A549 (cell line): ENCODE measurements at regions of chr17 and their contacts with region 1.

Region 1: GRCh38 chr17:81484195-81484979 is 28.2 kb downstream of the ACTG1 start:
- DNase-seq: peak; percentile 80 to 88
- ATAC-seq: peak; percentile 51 to 69
- H3K4me3 ChIP-seq: peak overlapping the region; percentile 37
- H3K27ac ChIP-seq: peak overlapping the region; percentile 86 to 89
- H3K4me1 ChIP-seq: peaks cover 39% of the 10 kb centered on the region
- CTCF ChIP-seq: peak; percentile 100
- EP300 ChIP-seq: no peak
- POLR2A ChIP-seq: 0 out of 2 replicates have a peak, but pooled peaks have one; percentile 21
- RAD21 ChIP-seq: peak; percentile 93 to 100

Region 2: GRCh38 chr17:80720610-80721577 is 763.5 kb before region 1 on chr17:
- CTCF ChIA-PET with region 1: no interaction called
- POLR2A ChIA-PET with region 1: no interaction called
- DNase-seq: peak; percentile 74 to 78
- ATAC-seq: peak; percentile 84 to 89
- H3K4me3 ChIP-seq: no peak overlapping the region
- H3K27ac ChIP-seq: peak overlapping the region; percentile 32 to 76
- H3K4me1 ChIP-seq: peaks cover 40% of the 10 kb centered on the region
- CTCF ChIP-seq: no peak
- EP300 ChIP-seq: peak in 1 of 2 experiments; percentile 16; a peak in 1 of 5 replicates
- POLR2A ChIP-seq: no peak
- RAD21 ChIP-seq: no peak

Region 3: DNA sequence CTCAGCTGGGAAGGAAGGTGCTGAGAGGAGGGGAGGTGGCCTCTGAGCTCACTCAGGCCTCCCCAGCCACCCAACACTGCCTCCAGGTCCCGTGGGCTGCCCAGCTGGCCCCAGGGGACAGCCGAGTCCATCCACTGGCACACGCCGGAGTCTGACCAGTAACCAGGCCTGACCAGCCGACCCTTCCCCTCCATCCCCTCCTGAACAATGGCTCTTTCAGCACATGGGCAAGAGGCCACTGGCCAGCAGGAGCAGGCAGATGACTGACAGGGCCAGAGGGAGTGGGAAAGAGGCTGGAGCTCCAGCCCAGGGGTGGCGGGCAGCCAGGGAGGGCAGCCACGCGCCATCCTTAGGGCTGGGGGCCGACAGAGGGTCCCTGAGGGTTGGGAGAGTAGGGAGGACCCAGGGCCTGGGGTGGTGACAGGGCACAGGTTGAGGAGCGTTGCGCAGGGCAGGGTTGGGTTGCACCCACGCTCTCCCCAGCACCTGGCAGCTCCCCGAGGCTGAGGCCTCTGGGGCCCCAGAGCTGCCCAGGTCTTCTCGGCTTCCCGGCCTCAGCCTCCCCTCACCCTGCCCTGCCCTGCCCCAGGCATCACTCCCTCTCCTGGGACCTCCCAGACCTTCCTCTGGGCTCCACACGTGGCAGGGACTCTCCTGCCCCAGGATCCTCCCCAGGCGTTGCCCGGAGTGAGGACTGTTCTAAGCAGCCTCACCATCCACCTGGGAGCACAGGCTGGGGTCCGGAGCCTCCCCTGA is 169.1 kb before region 1 on chr17:
- CTCF ChIA-PET with region 1: interaction called, 60 read pairs
- POLR2A ChIA-PET with region 1: no interaction called
- DNase-seq: no peak
- ATAC-seq: peak; percentile 9 to 19; a peak in 3 of 6 replicates
- H3K4me3 ChIP-seq: no peak overlapping the region
- H3K27ac ChIP-seq: 0 out of 6 replicates have a peak overlapping the region, but pooled peaks of 1 of the 2 experiments have one; percentile 33
- H3K4me1 ChIP-seq: no peaks in the 10 kb centered on the region; the same call in 2 of the 3 replicates
- CTCF ChIP-seq: no peak
- EP300 ChIP-seq: no peak
- POLR2A ChIP-seq: no peak
- RAD21 ChIP-seq: no peak

Region 4: DNA sequence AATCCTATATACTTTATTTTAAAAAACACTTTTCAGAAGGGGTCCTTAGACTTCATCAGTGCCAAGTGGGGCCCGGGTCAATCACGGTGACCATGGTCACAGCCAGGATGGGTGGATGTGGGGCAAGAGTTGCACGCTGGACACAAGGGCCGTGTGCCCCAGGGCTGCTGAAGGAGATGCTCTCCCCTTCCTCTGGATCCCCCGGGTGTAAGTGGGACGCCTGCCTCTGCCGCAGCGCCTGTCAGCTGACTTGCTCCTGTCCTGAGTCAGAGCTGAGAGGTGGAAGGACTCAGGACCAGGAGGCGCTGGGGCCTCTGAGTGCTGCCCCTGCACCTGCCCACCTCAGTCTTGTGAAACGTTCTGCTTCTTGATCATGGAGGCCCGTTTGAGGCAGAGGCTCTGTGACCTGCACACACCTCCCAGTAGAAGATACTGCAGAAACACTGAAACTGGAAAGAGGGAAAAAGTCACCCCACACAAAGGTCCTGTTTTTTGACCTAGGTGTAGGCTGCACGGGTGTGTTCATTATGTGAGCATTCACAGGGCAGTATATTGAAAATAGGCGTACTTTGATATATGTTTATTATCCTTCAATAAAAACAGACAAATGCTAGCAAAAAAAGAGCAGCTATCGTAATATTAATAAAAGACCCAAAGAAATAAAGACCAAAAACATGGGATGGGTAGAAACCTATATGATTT is 130.0 kb before region 1 on chr17:
- CTCF ChIA-PET with region 1: interaction called, 20 read pairs
- POLR2A ChIA-PET with region 1: no interaction called
- DNase-seq: no peak
- ATAC-seq: 0 out of 6 replicates have a peak, but pooled peaks of 1 of the 2 experiments have one; percentile 22
- H3K4me3 ChIP-seq: no peak overlapping the region
- H3K27ac ChIP-seq: no peak overlapping the region
- H3K4me1 ChIP-seq: 0 out of 3 replicates have a peak, but pooled peaks cover 4% of the 10 kb centered on the region
- CTCF ChIP-seq: no peak
- EP300 ChIP-seq: no peak
- POLR2A ChIP-seq: no peak
- RAD21 ChIP-seq: no peak

Region 5: GRCh38 chr17:81385320-81386111 is 98.9 kb before region 1 on chr17:
- CTCF ChIA-PET with region 1: interaction called, 14 read pairs
- POLR2A ChIA-PET with region 1: no interaction called
- DNase-seq: no peak
- ATAC-seq: no peak
- H3K4me3 ChIP-seq: no peak overlapping the region
- H3K27ac ChIP-seq: no peak overlapping the region
- H3K4me1 ChIP-seq: peaks cover 13% of the 10 kb centered on the region; the same call in 2 of the 3 replicates
- CTCF ChIP-seq: no peak
- EP300 ChIP-seq: no peak
- POLR2A ChIP-seq: no peak
- RAD21 ChIP-seq: no peak

Region 6: DNA sequence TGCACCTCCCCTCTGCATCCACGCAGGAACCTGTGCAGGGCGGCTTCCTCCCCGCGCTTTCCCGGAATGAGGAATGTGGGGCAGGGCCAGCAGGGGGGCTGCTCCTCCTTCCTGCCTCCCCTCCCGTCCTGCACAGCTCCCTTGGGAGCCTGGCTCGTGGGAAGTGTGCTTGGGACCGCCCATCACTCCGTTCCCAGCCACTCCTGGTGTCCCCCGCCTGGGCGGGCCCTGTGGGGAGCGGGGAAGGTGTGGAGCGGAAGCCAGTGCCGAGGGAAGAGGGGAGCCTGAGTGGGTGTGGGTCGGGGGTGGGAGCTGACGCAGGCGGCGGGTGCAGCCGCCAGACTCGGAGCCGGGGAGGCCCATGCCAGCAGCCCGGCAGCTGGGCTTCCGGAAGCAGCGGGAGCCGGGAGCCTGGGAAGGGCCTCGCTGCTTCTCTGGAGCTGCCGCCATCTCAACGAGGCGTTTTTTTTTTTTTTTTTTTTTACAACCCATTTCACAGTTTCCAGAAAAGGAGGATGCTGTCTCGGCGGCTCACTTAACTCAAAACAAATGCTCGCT is 65.0 kb before region 1 on chr17:
- CTCF ChIA-PET with region 1: interaction called, 23 read pairs
- POLR2A ChIA-PET with region 1: interaction called, 6 read pairs
- DNase-seq: peak; percentile 92 to 97
- ATAC-seq: peak; percentile 67 to 84
- H3K4me3 ChIP-seq: peak overlapping the region; percentile 38
- H3K27ac ChIP-seq: peak overlapping the region; percentile 98 to 100
- H3K4me1 ChIP-seq: peaks cover 77% of the 10 kb centered on the region
- CTCF ChIP-seq: no peak
- EP300 ChIP-seq: peak; percentile 18 to 36; a peak in 1 of 5 replicates
- POLR2A ChIP-seq: peak; percentile 70
- RAD21 ChIP-seq: no peak; a peak in 1 of 5 replicates

Region 7: DNA sequence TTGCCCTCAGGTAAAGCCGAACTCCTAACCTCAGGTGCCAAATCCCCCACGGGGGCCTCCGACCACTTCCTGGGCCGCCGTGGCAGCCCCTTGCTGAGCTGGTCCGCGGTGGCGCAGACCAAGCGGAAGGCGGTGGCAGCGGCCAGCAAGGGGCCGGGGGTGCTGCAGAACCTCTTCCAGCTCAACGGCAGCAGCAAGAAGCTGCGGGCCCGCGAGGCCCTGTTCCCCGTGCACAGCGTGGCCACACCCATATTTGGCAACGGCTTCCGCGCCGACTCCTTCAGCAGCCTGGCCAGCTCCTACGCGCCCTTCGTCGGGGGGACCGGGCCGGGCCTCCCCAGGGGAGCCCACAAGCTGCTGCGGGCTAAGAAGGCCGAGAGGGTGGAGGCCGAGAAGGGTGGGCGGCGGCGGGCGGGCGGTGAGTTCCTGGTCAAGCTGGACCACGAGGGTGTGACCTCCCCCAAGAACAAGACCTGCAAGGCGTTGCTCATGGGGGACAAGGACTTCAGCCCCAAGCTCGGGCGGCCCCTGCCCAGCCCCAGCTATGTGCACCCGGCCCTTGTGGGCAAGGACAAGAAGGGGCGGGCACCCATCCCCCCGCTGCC is 23.4 kb before region 1 on chr17:
- CTCF ChIA-PET with region 1: interaction called, 36 read pairs
- POLR2A ChIA-PET with region 1: no interaction called
- DNase-seq: no peak
- ATAC-seq: no peak
- H3K4me3 ChIP-seq: no peak overlapping the region
- H3K27ac ChIP-seq: no peak overlapping the region
- H3K4me1 ChIP-seq: peaks cover 10% of the 10 kb centered on the region; the same call in 2 of the 3 replicates
- CTCF ChIP-seq: no peak
- EP300 ChIP-seq: no peak
- POLR2A ChIP-seq: no peak
- RAD21 ChIP-seq: no peak

Region 8: GRCh38 chr17:81512560-81513371 is 28.4 kb after region 1 on chr17 and contains the start of gene ACTG1:
- CTCF ChIA-PET with region 1: interaction called, 34 read pairs
- POLR2A ChIA-PET with region 1: interaction called, 16 read pairs
- DNase-seq: peak; percentile 92 to 95
- ATAC-seq: peak; percentile 30 to 31
- H3K4me3 ChIP-seq: peak within 1 kb of the TSS; percentile 83
- H3K27ac ChIP-seq: peak within 1 kb of the TSS; percentile 99
- H3K4me1 ChIP-seq: peaks cover 29% of the 10 kb centered on the region
- CTCF ChIP-seq: no peak
- EP300 ChIP-seq: no peak
- POLR2A ChIP-seq: peak; percentile 98
- RAD21 ChIP-seq: no peak
- polyA plus RNA-seq, gene ACTG1: 2,042 and 2,306 TPM in 2 replicates